K562 (cell line): ENCODE measurements at regions of chr1 and their contacts with region 1.

Region 1: DNA sequence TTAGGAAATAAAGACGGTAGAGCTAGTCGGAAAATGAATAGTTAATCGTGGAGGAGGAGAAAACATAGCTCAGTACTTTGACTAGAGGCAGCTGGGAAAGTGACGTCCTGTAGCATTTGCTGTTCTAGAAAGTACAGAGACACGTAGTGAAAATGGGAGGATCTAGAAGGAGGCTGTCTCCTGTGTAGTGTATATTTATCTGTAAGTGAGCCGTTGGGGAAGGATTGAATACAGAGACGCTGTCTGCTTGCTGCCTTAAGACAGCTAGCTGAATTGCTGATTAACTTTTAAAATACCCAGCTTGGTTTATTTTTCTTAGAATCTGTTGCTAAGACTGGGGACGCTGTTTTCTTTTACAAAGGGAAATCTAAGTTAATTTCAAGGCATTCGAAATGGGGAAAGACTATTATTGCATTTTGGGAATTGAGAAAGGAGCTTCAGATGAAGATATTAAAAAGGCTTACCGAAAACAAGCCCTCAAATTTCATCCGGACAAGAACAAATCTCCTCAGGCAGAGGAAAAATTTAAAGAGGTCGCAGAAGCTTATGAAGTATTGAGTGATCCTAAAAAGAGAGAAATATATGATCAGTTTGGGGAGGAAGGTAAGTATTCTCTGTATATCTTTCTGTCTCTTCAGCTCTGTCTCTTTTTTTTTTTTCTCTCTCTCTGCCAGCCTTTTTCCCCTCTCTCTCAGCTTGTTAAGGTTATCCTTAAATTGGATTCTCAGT is at the start of gene DNAJB4:
- DNase-seq: peak; percentile 66 to 96 (median 72)
- ATAC-seq: peak; percentile 84
- H3K4me3 ChIP-seq: peak within 1 kb of the TSS; percentile 49
- H3K27ac ChIP-seq: peak within 1 kb of the TSS; percentile 96
- H3K4me1 ChIP-seq: peaks cover 0 to 5% of the 10 kb centered on the region in 2 experiments; a peak in 3 of 5 replicates
- H3K27me3 ChIP-seq: no peaks in the 10 kb centered on the region
- CTCF ChIP-seq: no peak
- EP300 ChIP-seq: no peak; the same call in 1 of the 2 replicates
- POLR2A ChIP-seq: no peak
- RAD21 ChIP-seq: no peak
- polyA plus RNA-seq, gene DNAJB4: 18.3 to 27.7 TPM

Region 2: GRCh38 chr1:77759071-77760028 is 245.5 kb before region 1 on chr1 and contains the start of gene USP33:
- CTCF ChIA-PET with region 1: no interaction called
- POLR2A ChIA-PET with region 1: no interaction called
- in situ Hi-C with region 1: no loop called
- intact Hi-C with region 1: loop called (anchors 5 kb)
- DNase-seq: peak; percentile 94 to 96 (median 94)
- ATAC-seq: peak; percentile 94
- H3K4me3 ChIP-seq: peak within 1 kb of the TSS; percentile 99
- H3K27ac ChIP-seq: peak within 1 kb of the TSS; percentile 92
- H3K4me1 ChIP-seq: peaks cover 20 to 32% of the 10 kb centered on the region in 2 experiments
- H3K27me3 ChIP-seq: no peaks in the 10 kb centered on the region
- CTCF ChIP-seq: peak in 2 of 3 experiments; percentile 4 to 12; a peak in 1 of 6 replicates
- EP300 ChIP-seq: no peak
- POLR2A ChIP-seq: peak; percentile 83
- RAD21 ChIP-seq: no peak
- polyA plus RNA-seq, gene USP33: 22.4 to 24.1 TPM

Region 3: GRCh38 chr1:77986810-77987209 is 18.1 kb before region 1 on chr1:
- CTCF ChIA-PET with region 1: no interaction called
- POLR2A ChIA-PET with region 1: interaction called, 199 read pairs
- in situ Hi-C with region 1: no loop called
- intact Hi-C with region 1: no loop called
- DNase-seq: no peak
- ATAC-seq: peak; percentile 29; the same call in 2 of the 3 replicates
- H3K4me3 ChIP-seq: no peak overlapping the region
- H3K27ac ChIP-seq: no peak overlapping the region
- H3K4me1 ChIP-seq: no peaks in the 10 kb centered on the region; a peak in 2 of 5 replicates
- H3K27me3 ChIP-seq: no peaks in the 10 kb centered on the region
- CTCF ChIP-seq: no peak
- EP300 ChIP-seq: no peak
- POLR2A ChIP-seq: no peak
- RAD21 ChIP-seq: no peak

Region 4: DNA sequence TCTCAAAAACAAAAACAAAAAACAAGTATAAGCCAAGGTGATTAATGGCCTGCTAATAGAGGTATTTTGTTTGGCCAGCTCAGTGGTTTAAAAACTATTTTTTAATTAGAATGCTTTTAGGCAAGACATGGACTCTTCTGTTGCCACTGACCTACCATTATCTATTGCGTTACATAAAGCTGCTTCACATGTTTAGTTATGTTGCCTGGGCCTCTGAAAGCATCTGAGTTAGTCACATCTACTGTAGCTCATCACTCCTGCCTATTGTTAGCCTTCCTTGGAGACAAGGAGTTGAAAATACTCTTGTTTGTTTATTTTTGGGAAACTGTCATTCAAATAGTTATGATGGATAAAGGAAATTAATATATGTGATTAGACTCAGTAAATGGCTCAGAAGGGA is 14.1 kb after region 1 on chr1:
- CTCF ChIA-PET with region 1: interaction called, 3 read pairs
- POLR2A ChIA-PET with region 1: interaction called, 43 read pairs
- in situ Hi-C with region 1: no loop called
- intact Hi-C with region 1: no loop called
- DNase-seq: no peak
- ATAC-seq: peak; percentile 63
- H3K4me3 ChIP-seq: no peak overlapping the region
- H3K27ac ChIP-seq: no peak overlapping the region
- H3K4me1 ChIP-seq: no peaks in the 10 kb centered on the region
- H3K27me3 ChIP-seq: no peaks in the 10 kb centered on the region
- CTCF ChIP-seq: no peak
- EP300 ChIP-seq: no peak
- POLR2A ChIP-seq: peak; percentile 32; the same call in 1 of the 2 replicates
- RAD21 ChIP-seq: no peak

Region 5: DNA sequence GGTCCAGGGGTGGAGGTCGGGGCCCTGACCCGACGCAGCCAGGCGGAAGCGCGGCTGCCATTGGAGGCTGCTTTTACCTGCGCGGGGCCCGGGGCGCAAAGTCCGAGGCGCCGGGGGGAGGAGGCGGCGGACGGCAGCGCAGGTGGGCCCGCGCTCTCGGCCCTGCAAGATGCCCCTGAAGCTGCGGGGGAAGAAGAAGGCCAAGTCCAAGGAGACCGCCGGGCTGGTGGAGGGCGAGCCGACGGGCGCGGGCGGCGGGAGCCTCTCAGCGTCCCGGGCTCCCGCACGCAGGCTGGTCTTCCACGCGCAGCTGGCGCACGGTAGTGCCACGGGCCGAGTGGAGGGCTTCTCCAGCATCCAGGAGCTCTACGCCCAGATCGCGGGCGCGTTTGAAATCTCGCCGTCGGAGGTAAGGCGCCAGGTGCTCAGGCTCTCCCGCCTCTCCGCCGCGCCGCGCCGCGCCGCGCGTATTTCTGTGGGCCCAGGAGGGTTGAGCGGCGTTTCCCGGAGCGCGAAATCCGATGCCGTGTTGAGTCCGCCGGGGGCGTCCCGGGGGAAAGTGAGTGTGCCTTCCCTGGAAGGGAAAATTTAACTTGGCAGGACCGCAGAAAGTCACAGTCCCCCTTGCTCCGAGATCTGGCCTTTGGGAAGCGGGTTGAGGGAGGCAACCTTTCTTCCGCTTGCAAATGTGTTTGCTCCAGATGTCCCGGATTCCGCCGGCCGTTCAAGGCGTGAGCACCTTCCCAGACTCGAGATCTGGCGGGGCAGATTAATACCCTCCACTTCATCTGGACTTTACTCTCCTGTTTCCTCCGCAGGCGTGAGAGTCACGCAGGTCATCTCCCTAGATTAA is 41.3 kb after region 1 on chr1 and contains the start of gene GIPC2:
- CTCF ChIA-PET with region 1: no interaction called
- POLR2A ChIA-PET with region 1: interaction called, 11 read pairs
- in situ Hi-C with region 1: no loop called
- intact Hi-C with region 1: no loop called
- DNase-seq: no peak
- ATAC-seq: no peak
- H3K4me3 ChIP-seq: no peak within 1 kb of the TSS
- H3K27ac ChIP-seq: no peak within 1 kb of the TSS
- H3K4me1 ChIP-seq: peaks cover 0 to 5% of the 10 kb centered on the region in 2 experiments; a peak in 1 of 5 replicates
- H3K27me3 ChIP-seq: no peaks in the 10 kb centered on the region
- CTCF ChIP-seq: no peak
- EP300 ChIP-seq: no peak
- POLR2A ChIP-seq: no peak
- RAD21 ChIP-seq: no peak
- polyA plus RNA-seq, gene GIPC2: 0.01 TPM in 1 of 2 experiments, not detected in the other

Region 6: DNA sequence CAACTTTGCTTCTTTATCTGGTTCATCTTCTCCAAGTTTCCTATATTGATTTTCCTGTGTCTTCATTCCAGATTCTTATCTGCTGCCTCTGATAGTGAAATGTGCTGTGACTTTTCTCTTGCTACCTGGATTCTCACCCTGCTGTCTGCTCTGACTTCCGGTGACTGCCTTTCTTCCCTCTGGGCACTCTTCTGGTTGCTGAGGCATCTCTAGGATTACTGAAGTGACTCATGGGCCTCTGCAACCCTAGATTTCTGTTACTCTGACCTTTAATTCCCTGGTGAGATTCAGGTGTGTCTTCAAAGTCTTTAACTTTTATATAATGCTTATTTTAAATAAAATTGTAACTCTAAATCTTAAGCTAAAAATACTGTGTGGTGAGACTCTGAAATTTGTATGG is 87.8 kb after region 1 on chr1:
- CTCF ChIA-PET with region 1: no interaction called
- POLR2A ChIA-PET with region 1: interaction called, 19 read pairs
- in situ Hi-C with region 1: no loop called
- intact Hi-C with region 1: loop called (anchors 5 kb)
- DNase-seq: no peak
- ATAC-seq: no peak
- H3K4me3 ChIP-seq: no peak overlapping the region
- H3K27ac ChIP-seq: no peak overlapping the region
- H3K4me1 ChIP-seq: peaks cover 6 to 13% of the 10 kb centered on the region in 2 experiments
- H3K27me3 ChIP-seq: no peaks in the 10 kb centered on the region
- CTCF ChIP-seq: no peak
- EP300 ChIP-seq: no peak
- POLR2A ChIP-seq: no peak
- RAD21 ChIP-seq: no peak

Region 7: GRCh38 chr1:78114034-78114956 is 109.4 kb after region 1 on chr1:
- CTCF ChIA-PET with region 1: no interaction called
- POLR2A ChIA-PET with region 1: interaction called, 21 read pairs
- in situ Hi-C with region 1: loop called (anchors 10 kb)
- intact Hi-C with region 1: loop called (anchors 2 kb)
- DNase-seq: peak; percentile 37 to 83 (median 53)
- ATAC-seq: peak; percentile 93
- H3K4me3 ChIP-seq: no peak overlapping the region
- H3K27ac ChIP-seq: no peak overlapping the region
- H3K4me1 ChIP-seq: peaks cover 0 to 4% of the 10 kb centered on the region in 2 experiments; a peak in 3 of 5 replicates
- H3K27me3 ChIP-seq: no peaks in the 10 kb centered on the region
- CTCF ChIP-seq: peak; percentile 87 to 100 (median 99)
- EP300 ChIP-seq: no peak
- POLR2A ChIP-seq: no peak
- RAD21 ChIP-seq: peak; percentile 99 to 100

Region 8: DNA sequence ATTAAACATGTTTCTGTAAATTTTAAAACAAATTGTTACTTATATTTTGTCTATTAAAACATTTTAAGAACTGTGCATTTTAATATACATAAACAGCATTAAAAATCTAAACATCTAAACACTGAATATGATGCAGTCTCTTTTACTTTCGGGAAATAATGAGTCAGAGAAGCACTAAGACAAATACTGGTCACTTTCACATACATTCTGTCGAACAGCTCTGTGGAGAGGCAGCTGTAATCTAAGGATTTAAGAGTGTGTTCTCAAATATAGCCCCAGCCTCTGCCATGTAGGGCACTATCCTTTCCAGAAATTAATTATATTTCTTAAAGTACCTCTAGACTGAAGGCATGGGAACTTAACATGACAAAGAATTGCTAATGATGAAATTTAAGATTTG is 396.3 kb after region 1 on chr1:
- CTCF ChIA-PET with region 1: no interaction called
- POLR2A ChIA-PET with region 1: no interaction called
- in situ Hi-C with region 1: no loop called
- intact Hi-C with region 1: no loop called
- DNase-seq: no peak
- ATAC-seq: no peak
- H3K4me3 ChIP-seq: no peak overlapping the region
- H3K27ac ChIP-seq: no peak overlapping the region
- H3K4me1 ChIP-seq: no peaks in the 10 kb centered on the region
- H3K27me3 ChIP-seq: no peaks in the 10 kb centered on the region
- CTCF ChIP-seq: no peak
- EP300 ChIP-seq: no peak
- POLR2A ChIP-seq: no peak
- RAD21 ChIP-seq: no peak